ENCODE measurements at regions of chr17 and their contacts with region 1.

Region 1: DNA sequence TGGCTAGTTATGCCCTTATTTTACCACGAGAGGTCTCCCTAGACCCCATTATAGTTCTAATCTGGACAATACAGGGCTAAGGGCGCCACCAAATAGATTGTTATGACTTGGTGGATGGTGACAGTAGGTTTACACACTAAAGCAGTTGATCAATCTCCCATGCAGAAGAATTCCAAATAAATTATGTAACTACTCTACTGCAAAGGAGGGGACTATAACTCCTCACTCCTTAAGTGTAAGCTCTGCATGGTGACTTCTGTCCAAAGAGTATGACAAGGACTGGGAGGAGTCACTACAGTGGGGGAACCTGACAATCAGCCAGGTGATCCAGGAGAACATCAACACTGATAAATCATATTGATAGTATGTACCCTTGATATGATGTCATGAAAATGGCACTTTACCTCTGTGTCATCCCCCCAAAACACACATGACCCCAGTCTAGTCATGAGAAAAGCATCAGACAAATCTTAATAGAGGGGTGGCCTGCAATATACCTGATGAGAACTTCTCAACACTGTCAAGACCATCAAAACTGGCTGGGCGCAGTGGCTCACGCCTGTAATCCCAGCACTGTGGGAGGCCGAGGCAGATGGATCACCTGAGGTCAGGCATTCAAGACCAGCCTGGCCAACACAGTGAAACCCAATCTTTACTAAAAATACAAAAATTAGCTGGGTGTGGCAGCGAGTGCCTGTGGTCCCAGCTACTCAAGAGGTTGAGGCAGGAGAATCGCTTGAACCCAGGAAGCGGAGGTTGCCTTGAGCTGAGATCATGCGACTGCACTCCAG is 20.1 kb upstream of the YPEL2 start:
- DNase-seq: peak; percentile 49
- ATAC-seq: peak; percentile 99
- H3K4me3 ChIP-seq: no peak overlapping the region
- H3K27ac ChIP-seq: no peak overlapping the region
- H3K4me1 ChIP-seq: no peaks in the 10 kb centered on the region
- H3K27me3 ChIP-seq: peaks cover 3% of the 10 kb centered on the region; the same call in 1 of the 2 replicates
- CTCF ChIP-seq: peak; percentile 83
- POLR2A ChIP-seq: no peak
- RAD21 ChIP-seq: peak; percentile 89

Region 2: GRCh38 chr17:59220376-59221158 is 90.8 kb before region 1 on chr17 and contains the start of gene GDPD1:
- CTCF ChIA-PET with region 1: no interaction called
- POLR2A ChIA-PET with region 1: no interaction called
- dilution Hi-C with region 1: no loop called
- in situ Hi-C with region 1: no loop called
- intact Hi-C with region 1: loop called (anchors 2 kb)
- DNase-seq: peak; percentile 87
- ATAC-seq: peak; percentile 98
- H3K4me3 ChIP-seq: peak within 1 kb of the TSS; percentile 69
- H3K27ac ChIP-seq: peak within 1 kb of the TSS; percentile 0; the same call in 1 of the 2 replicates
- H3K4me1 ChIP-seq: no peaks in the 10 kb centered on the region
- H3K27me3 ChIP-seq: no peaks in the 10 kb centered on the region
- CTCF ChIP-seq: peak; percentile 63
- POLR2A ChIP-seq: no peak
- RAD21 ChIP-seq: peak; percentile 55
- total RNA-seq, gene GDPD1: 0.72 and 1.1 TPM in 2 replicates

Region 3: DNA sequence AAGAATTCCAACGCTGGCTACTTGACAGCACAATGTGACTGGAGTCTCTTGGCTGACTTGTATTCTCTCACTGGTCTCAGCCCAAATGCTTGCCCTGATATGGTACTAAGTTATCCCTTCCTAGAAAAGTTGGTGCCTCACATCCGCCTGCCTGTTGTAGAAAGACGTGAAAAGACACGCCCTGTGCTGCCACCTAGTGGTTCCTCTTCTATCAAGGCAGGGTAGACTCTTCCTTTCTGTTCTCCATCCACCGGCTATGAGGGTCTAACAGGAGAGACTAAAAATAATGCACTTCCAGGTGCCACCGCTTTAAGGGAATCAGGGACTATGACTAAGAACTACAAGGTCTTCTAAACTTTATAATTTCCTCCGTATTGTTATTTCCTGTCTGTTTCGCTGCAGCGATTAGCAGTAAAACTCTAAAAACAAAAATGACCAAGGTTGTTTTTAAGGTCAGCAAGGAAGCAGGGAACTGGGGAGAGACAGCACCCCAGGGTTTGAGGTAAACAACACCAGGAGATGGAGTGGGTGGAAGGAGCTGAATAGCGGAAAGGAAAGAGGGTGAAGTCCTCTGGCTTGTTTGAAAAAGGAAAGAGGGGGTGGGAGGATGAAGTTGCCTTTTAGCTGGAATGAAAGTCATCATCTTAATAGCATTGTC is 129.6 kb after region 1 on chr17:
- CTCF ChIA-PET with region 1: interaction called, 15 read pairs
- POLR2A ChIA-PET with region 1: no interaction called
- dilution Hi-C with region 1: no loop called
- in situ Hi-C with region 1: loop called (anchors 5 kb)
- intact Hi-C with region 1: loop called (anchors 1 kb)
- DNase-seq: peak; percentile 88
- ATAC-seq: peak; percentile 99
- H3K4me3 ChIP-seq: no peak overlapping the region
- H3K27ac ChIP-seq: no peak overlapping the region
- H3K4me1 ChIP-seq: peaks cover 5% of the 10 kb centered on the region
- H3K27me3 ChIP-seq: no peaks in the 10 kb centered on the region
- CTCF ChIP-seq: peak; percentile 81
- POLR2A ChIP-seq: no peak
- RAD21 ChIP-seq: peak; percentile 94

Region 4: GRCh38 chr17:59521204-59522126 is 210.1 kb after region 1 on chr17:
- CTCF ChIA-PET with region 1: interaction called, 3 read pairs
- POLR2A ChIA-PET with region 1: no interaction called
- dilution Hi-C with region 1: no loop called
- in situ Hi-C with region 1: no loop called
- intact Hi-C with region 1: loop called (anchors 1 kb)
- DNase-seq: peak; percentile 59
- ATAC-seq: peak; percentile 99
- H3K4me3 ChIP-seq: no peak overlapping the region
- H3K27ac ChIP-seq: no peak overlapping the region
- H3K4me1 ChIP-seq: 0 out of 2 replicates have a peak, but pooled peaks cover 2% of the 10 kb centered on the region
- H3K27me3 ChIP-seq: peaks cover 5% of the 10 kb centered on the region
- CTCF ChIP-seq: peak; percentile 77
- POLR2A ChIP-seq: no peak
- RAD21 ChIP-seq: peak; percentile 72

Region 5: GRCh38 chr17:59558977-59559376 is 247.7 kb after region 1 on chr17:
- CTCF ChIA-PET with region 1: interaction called, 6 read pairs
- POLR2A ChIA-PET with region 1: no interaction called
- dilution Hi-C with region 1: no loop called
- in situ Hi-C with region 1: no loop called
- intact Hi-C with region 1: loop called (anchors 1 kb)
- DNase-seq: peak; percentile 7
- ATAC-seq: no peak
- H3K4me3 ChIP-seq: no peak overlapping the region
- H3K27ac ChIP-seq: no peak overlapping the region
- H3K4me1 ChIP-seq: no peaks in the 10 kb centered on the region
- H3K27me3 ChIP-seq: peaks cover 4% of the 10 kb centered on the region
- CTCF ChIP-seq: peak; percentile 42
- POLR2A ChIP-seq: no peak
- RAD21 ChIP-seq: peak; percentile 33; the same call in 1 of the 2 replicates

Region 6: GRCh38 chr17:60036796-60037612 is 725.7 kb after region 1 on chr17:
- CTCF ChIA-PET with region 1: no interaction called
- POLR2A ChIA-PET with region 1: no interaction called
- dilution Hi-C with region 1: no loop called
- in situ Hi-C with region 1: no loop called
- intact Hi-C with region 1: loop called (anchors 10 kb)
- DNase-seq: peak; percentile 61
- ATAC-seq: peak; percentile 96
- H3K4me3 ChIP-seq: no peak overlapping the region
- H3K27ac ChIP-seq: no peak overlapping the region
- H3K4me1 ChIP-seq: no peaks in the 10 kb centered on the region
- H3K27me3 ChIP-seq: peaks cover 3% of the 10 kb centered on the region; the same call in 1 of the 2 replicates
- CTCF ChIP-seq: peak; percentile 80
- POLR2A ChIP-seq: no peak
- RAD21 ChIP-seq: peak; percentile 48